Activated CD4-positive, alpha-beta memory T cell treated with anti-CD3 and anti-CD28 coated beads, Interleukin-2, amount 10 ng/mL, durations not matched to agents 7 days and 5 days (primary cell): ENCODE measurements at regions of chr11 and their contacts with region 1.

Region 1: DNA sequence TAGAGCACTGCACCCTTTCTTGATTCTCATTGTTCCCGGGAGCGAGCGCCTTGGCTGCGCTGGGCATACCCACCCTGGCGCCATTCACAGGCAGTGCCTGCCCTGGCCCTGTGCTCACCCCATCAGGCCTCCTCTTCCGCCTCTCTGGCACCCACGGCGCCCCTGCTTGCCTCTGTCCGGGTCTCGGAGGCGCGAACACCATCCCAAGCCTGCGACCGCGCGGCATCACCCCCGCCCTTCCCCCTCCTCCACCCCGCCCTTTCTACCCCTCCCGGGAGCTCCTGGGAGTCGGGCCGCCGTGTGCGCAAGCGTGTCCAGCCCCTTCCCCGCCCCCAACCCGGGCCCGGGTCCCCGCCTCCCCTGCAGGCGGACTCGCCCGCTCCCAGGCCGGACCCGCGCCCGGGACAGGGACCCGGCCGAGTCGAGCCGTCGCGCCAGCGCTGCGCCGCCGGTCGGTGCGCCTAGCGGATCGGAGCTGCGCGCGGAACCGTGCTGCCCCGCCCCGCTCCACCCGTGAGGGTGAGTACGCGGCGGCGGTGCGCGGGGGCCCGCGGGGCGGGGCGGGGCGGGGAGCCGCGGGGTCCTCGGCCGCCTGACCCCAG is at the start of gene ST3GAL4:
- DNase-seq: peak; percentile 76
- H3K4me3 Mint-ChIP-seq: peak within 1 kb of the TSS; percentile 92
- H3K27ac Mint-ChIP-seq: peak within 1 kb of the TSS; percentile 67
- H3K4me1 Mint-ChIP-seq: peaks cover 52% of the 10 kb centered on the region
- H3K27me3 Mint-ChIP-seq: no peaks in the 10 kb centered on the region
- total RNA-seq, gene ST3GAL4: 7.4 to 8.5 TPM

Region 2: DNA sequence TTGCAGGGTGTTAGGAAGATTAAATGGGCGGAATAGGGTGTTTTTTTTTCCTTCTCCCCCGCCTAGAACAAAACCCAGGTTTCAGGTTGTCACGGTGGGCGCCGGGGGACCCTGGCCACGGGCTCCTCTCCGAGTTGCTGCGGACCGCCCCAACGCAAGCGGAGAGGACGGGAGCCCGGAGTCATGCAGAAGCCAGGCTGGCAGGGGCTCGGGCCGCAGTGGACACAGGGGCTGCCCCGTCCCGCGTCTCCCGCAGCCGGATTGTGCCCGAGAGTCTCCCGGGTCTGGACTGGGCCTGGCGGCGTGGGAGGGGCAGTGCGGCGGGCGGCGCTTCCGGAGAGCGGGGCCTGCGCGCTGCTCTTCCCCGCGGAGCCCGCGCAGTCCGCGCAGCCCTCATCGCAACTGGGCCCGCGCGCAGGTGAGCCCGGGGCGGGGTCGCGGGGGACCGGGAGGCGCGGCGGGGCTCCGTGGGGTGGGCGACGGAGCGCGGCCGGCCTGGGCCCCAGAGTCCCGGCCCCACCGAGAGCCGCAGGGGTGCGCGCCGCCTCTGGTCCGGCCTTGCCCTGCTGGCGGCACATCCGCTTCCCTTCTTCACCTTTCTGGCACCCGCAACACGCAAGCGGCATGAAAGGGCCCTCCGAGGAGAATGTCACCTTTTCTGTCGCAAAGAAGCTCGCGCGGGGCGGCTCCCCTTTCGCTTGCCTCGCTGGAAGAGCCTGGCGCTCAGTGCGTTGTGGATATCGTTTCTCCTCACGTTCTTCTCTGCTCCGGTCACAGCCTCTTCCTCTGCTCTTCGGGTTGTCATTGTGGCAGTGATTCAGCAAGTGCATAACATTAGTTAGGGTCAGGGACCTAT is 72.5 kb before region 1 on chr11 and contains the start of gene TIRAP:
- CTCF ChIA-PET with region 1: interaction called, 5 read pairs
- POLR2A ChIA-PET with region 1: interaction called, 16 read pairs
- DNase-seq: peak; percentile 70
- H3K4me3 Mint-ChIP-seq: peak within 1 kb of the TSS; percentile 100
- H3K27ac Mint-ChIP-seq: peak within 1 kb of the TSS; percentile 99
- H3K4me1 Mint-ChIP-seq: peaks cover 54% of the 10 kb centered on the region
- H3K27me3 Mint-ChIP-seq: no peaks in the 10 kb centered on the region
- total RNA-seq, gene TIRAP: 14.2 to 17.0 TPM

Region 3: GRCh38 chr11:126310228-126310991 is 45.0 kb before region 1 on chr11:
- CTCF ChIA-PET with region 1: interaction called, 13 read pairs
- POLR2A ChIA-PET with region 1: interaction called, 3 read pairs
- DNase-seq: peak; percentile 65
- H3K4me3 Mint-ChIP-seq: no peak overlapping the region
- H3K27ac Mint-ChIP-seq: no peak overlapping the region
- H3K4me1 Mint-ChIP-seq: peaks cover 27% of the 10 kb centered on the region
- H3K27me3 Mint-ChIP-seq: no peaks in the 10 kb centered on the region

Region 4: DNA sequence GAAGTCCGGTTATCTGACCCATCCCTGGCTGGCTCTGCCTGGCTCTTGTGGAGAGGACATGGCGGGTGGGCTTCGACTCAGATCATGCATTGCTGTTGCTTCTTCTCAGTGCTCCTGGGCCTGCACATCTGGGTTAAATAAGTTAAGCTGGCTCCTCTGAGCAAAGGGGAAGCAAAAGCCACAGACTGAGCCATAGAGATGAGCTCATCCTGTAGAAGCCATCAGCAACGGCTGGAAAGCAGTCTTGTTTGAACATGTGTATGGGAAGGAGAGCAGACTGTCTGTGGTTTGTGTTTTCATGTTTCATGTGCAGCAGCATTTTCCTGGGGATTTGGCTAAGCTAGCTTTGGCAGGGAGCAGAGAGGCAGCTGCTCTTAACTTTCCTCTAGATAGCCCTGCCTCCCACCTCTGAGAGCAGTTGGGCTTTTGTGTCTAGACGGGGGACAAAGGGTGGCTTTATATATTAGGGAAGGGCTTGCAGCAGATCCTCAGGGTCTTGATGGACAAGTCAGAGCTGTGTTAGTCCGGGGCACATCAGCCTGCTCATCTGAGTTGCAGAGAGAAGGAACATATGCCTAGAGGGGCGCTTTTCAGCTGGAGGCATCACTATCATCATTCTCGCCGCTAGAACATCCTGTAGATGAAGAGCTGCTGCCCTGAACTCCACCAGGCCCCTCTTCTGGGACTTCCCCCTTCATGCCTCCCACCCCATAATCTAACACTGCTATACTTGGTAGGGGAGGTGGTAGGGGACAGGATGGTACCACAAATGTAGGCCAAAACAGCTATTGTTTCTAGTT is 36.7 kb before region 1 on chr11:
- CTCF ChIA-PET with region 1: interaction called, 7 read pairs
- POLR2A ChIA-PET with region 1: interaction called, 14 read pairs
- DNase-seq: peak; percentile 44
- H3K4me3 Mint-ChIP-seq: no peak overlapping the region
- H3K27ac Mint-ChIP-seq: peak overlapping the region; percentile 78
- H3K4me1 Mint-ChIP-seq: peaks cover 33% of the 10 kb centered on the region
- H3K27me3 Mint-ChIP-seq: no peaks in the 10 kb centered on the region

Region 5: GRCh38 chr11:126341760-126342161 is 13.7 kb before region 1 on chr11:
- CTCF ChIA-PET with region 1: no interaction called
- POLR2A ChIA-PET with region 1: interaction called, 24 read pairs
- DNase-seq: no peak
- H3K4me3 Mint-ChIP-seq: no peak overlapping the region
- H3K27ac Mint-ChIP-seq: peak overlapping the region; percentile 68
- H3K4me1 Mint-ChIP-seq: peaks cover 31% of the 10 kb centered on the region
- H3K27me3 Mint-ChIP-seq: no peaks in the 10 kb centered on the region

Region 6: GRCh38 chr11:126459691-126460281 is 104.4 kb after region 1 on chr11:
- CTCF ChIA-PET with region 1: no interaction called
- POLR2A ChIA-PET with region 1: no interaction called
- DNase-seq: no peak
- H3K4me3 Mint-ChIP-seq: no peak overlapping the region
- H3K27ac Mint-ChIP-seq: no peak overlapping the region
- H3K4me1 Mint-ChIP-seq: peaks cover 5% of the 10 kb centered on the region
- H3K27me3 Mint-ChIP-seq: peaks cover 8% of the 10 kb centered on the region